ENCODE measurements at regions of chr13 and their contacts with region 1.

Region 1: GRCh38 chr13:30802953-30803478 is 67.7 kb downstream of the ALOX5AP start:
- DNase-seq: peak; percentile 39
- ATAC-seq: peak; percentile 84
- H3K4me3 ChIP-seq: peak overlapping the region in 1 of 3 experiments; percentile 25; a peak in 1 of 6 replicates
- H3K27ac ChIP-seq: no peak overlapping the region
- H3K4me1 ChIP-seq: peaks cover 59% of the 10 kb centered on the region
- H3K27me3 ChIP-seq: no peaks in the 10 kb centered on the region; a peak in 1 of 5 replicates
- CTCF ChIP-seq: peak; percentile 95
- EP300 ChIP-seq: no peak
- POLR2A ChIP-seq: no peak
- RAD21 ChIP-seq: peak; percentile 90

Region 2: DNA sequence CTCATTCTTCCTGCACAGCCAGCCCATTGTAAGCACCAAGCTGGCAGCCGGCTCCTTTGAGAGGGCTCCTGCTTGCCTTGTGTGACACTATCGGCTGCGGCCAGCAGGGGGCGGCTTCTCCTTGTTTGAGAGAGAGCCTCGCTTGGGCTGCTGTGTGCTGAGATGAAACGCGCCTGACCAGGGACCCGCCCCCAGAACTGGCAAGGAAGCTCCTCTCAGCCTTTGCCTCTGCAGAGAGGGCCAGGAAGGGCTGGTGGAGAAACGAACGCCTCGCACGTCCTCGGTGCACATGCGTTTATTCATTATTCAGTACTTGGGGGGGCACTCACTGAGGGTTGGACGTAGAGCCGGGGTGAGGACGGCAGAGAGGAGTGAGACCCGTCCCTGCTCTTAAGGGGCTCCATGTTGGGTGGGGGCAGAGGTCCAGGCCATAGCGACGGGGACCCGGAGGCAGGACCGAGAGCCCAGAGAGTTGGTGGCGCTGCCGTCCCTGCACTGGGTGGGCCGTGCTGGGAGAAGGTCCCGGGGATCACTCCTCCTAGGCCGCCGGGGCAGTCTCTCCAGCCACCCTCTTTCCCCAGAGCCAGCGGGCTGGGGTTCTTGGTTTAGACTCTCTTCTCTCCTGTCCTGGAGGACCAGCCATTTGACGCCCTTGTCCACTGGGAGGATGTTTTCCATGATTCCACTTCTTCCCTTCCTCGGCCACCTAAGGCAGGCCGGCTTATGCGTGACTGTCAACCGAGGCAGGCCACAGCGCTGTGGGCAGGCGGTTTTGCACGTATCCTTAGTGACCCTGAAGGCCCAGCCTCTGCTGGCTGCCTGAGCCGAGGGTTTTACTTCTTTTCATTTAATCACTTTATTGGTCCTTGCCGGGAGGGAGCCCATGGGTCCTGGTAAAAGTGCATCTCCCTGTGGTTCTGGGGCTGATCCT is 670.1 kb before region 1 on chr13:
- CTCF ChIA-PET with region 1: no interaction called
- POLR2A ChIA-PET with region 1: no interaction called
- in situ Hi-C with region 1: no loop called
- intact Hi-C with region 1: loop called (anchors 10 kb)
- DNase-seq: peak; percentile 80
- ATAC-seq: peak; percentile 97
- H3K4me3 ChIP-seq: peak overlapping the region in 1 of 3 experiments; percentile 20; a peak in 1 of 6 replicates
- H3K27ac ChIP-seq: no peak overlapping the region
- H3K4me1 ChIP-seq: peaks cover 9% of the 10 kb centered on the region; the same call in 1 of the 2 replicates
- H3K27me3 ChIP-seq: peaks cover 0 to 19% of the 10 kb centered on the region in 2 experiments; a peak in 3 of 5 replicates
- CTCF ChIP-seq: peak; percentile 94
- EP300 ChIP-seq: no peak
- POLR2A ChIP-seq: no peak
- RAD21 ChIP-seq: peak; percentile 86

Region 3: DNA sequence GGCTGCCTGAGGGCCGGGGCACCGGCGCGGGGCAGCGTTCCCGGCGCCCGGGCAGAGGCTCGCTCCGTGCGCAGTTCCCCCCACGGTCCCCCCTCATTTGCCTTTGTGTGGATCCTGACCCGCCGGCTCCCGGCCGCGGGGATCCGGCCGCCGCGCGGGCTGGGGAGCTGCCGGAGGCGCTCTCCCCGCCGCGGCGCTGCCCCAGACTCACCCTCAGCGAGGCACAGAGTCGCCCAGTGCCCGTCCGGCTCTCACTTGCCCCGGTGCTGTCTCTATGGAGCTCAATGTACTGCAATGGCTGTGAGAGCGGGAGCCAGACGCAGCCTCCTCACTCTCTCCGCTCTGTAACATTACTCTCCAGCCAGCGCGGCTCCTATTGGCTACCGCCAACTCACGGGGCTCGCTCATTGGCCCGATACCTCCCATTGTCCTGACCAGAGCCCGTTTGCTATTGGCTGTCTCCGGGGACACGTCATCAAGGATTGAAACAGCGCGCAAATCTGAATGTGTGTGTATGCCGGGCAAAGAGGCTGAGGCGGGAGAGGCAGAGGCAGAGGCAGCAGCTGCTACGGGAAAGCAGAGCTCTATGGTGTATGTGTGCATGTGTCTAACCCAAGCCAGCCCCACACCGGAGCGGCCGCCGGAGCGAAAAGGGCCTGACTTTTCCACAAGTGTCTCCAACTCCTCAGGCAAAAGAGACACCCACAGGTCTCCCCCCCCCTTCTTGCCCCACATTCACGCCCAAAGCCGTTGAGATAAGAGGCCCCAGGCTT is 337.2 kb before region 1 on chr13 and contains the start of gene HMGB1:
- CTCF ChIA-PET with region 1: no interaction called
- POLR2A ChIA-PET with region 1: no interaction called
- in situ Hi-C with region 1: no loop called
- intact Hi-C with region 1: loop called (anchors 1 kb)
- DNase-seq: peak; percentile 98
- ATAC-seq: peak; percentile 97
- H3K4me3 ChIP-seq: peak within 1 kb of the TSS; percentile 74 to 92 (median 86)
- H3K27ac ChIP-seq: peak within 1 kb of the TSS; percentile 99
- H3K4me1 ChIP-seq: peaks cover 27% of the 10 kb centered on the region
- H3K27me3 ChIP-seq: no peaks in the 10 kb centered on the region; a peak in 2 of 5 replicates
- CTCF ChIP-seq: no peak
- EP300 ChIP-seq: no peak
- POLR2A ChIP-seq: peak; percentile 85 to 94
- RAD21 ChIP-seq: peak; percentile 46; the same call in 1 of the 2 replicates
- total RNA-seq, gene HMGB1: 584 and 878 TPM in 2 replicates

Region 4: GRCh38 chr13:30477346-30478195 is 325.4 kb before region 1 on chr13:
- CTCF ChIA-PET with region 1: no interaction called
- POLR2A ChIA-PET with region 1: no interaction called
- in situ Hi-C with region 1: no loop called
- intact Hi-C with region 1: no loop called
- DNase-seq: no peak
- ATAC-seq: no peak
- H3K4me3 ChIP-seq: no peak overlapping the region
- H3K27ac ChIP-seq: no peak overlapping the region
- H3K4me1 ChIP-seq: peaks cover 12% of the 10 kb centered on the region
- H3K27me3 ChIP-seq: no peaks in the 10 kb centered on the region; a peak in 1 of 5 replicates
- CTCF ChIP-seq: no peak
- EP300 ChIP-seq: no peak
- POLR2A ChIP-seq: no peak
- RAD21 ChIP-seq: no peak

Region 5: DNA sequence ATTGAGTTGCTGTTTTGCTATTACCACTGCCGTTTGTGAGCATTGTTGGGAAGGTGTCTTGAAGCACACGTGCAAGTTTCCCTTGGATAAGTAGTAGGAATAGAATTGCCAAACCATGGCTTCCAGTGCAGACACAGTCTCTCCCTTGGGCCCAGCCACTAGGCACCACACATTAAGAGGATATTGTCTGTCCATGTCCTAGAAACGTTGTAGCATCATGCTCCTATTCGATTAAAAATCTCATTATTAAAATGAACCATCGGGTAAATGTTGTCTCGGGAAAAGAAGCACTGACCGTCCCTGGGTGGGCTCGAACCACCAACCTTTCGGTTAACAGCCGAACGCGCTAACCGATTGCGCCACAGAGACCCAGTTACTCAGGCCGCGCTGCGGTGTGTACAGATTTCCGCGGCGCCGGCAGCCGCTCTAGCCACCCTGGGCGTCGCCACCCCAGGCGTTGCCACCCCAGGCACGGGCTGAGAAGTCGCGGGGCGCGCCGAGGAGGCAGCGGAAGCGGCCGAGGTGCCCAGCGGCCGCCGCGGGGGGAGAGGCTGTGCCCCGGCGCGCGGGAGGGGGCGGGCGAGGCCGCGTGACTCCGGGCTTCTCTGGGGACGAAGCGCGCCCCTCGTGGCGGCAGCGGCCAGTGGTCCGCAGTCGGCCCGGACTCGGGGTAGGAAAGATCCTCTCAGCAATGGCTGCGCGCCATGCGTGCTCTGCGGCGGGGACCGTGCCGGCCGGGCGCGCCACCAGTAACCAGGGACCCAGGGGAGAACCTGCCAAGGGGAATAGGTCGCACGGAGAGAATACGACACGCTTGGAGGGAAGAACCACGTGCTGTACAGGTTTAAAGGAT is 129.1 kb before region 1 on chr13:
- CTCF ChIA-PET with region 1: no interaction called
- POLR2A ChIA-PET with region 1: no interaction called
- in situ Hi-C with region 1: loop called (anchors 5 kb)
- intact Hi-C with region 1: loop called (anchors 2 kb)
- DNase-seq: peak; percentile 76
- ATAC-seq: peak; percentile 95
- H3K4me3 ChIP-seq: peak overlapping the region; percentile 58 to 73 (median 68)
- H3K27ac ChIP-seq: peak overlapping the region; percentile 65
- H3K4me1 ChIP-seq: peaks cover 27% of the 10 kb centered on the region
- H3K27me3 ChIP-seq: no peaks in the 10 kb centered on the region
- CTCF ChIP-seq: peak; percentile 79
- EP300 ChIP-seq: peak in 1 of 2 experiments; percentile 67; a peak in 2 of 4 replicates
- POLR2A ChIP-seq: peak; percentile 38 to 52; a peak in 2 of 4 replicates
- RAD21 ChIP-seq: peak; percentile 84

Region 6: DNA sequence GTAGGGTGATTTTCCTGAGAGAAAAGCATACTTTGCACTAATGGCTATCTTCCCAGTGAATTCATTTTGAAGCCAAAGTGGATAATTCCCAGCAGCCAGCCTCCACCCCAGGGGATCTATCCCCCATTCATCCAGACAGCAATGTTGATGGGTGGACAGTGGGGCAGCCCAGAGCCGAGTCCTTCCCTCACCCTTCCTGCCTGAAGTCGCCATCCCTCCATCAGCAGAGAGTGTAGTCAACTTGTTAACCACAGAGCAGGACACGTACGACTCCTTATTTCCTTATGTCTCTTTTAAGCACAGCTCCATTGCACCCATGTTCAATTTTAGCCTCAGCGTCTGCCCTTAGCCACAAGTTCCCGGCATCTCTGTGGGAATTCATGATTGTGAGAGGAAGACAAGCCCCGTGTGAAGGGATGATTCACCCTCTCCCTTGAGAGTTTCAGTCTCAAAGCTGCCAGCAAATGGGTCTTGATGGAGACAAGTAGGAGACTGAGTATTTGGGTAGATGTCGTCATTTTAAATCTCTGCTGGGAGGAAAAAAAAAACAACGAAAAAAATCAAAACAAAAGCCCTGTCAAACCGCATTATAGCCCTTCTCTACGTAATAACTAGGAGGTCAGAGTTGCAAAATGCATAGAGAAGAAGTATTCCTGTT is 44.8 kb after region 1 on chr13:
- CTCF ChIA-PET with region 1: no interaction called
- POLR2A ChIA-PET with region 1: no interaction called
- in situ Hi-C with region 1: no loop called
- intact Hi-C with region 1: loop called (anchors 5 kb)
- DNase-seq: no peak
- ATAC-seq: no peak
- H3K4me3 ChIP-seq: 0 out of 6 replicates have a peak overlapping the region, but pooled peaks of 1 of the 3 experiments have one; percentile 27
- H3K27ac ChIP-seq: no peak overlapping the region
- H3K4me1 ChIP-seq: peaks cover 97% of the 10 kb centered on the region
- H3K27me3 ChIP-seq: no peaks in the 10 kb centered on the region
- CTCF ChIP-seq: no peak
- EP300 ChIP-seq: no peak
- POLR2A ChIP-seq: no peak
- RAD21 ChIP-seq: no peak

Region 7: GRCh38 chr13:31350560-31350959 is 547.5 kb after region 1 on chr13:
- CTCF ChIA-PET with region 1: no interaction called
- POLR2A ChIA-PET with region 1: no interaction called
- in situ Hi-C with region 1: no loop called
- intact Hi-C with region 1: no loop called
- DNase-seq: no peak
- ATAC-seq: no peak
- H3K4me3 ChIP-seq: no peak overlapping the region
- H3K27ac ChIP-seq: no peak overlapping the region
- H3K4me1 ChIP-seq: no peaks in the 10 kb centered on the region
- H3K27me3 ChIP-seq: no peaks in the 10 kb centered on the region; a peak in 2 of 5 replicates
- CTCF ChIP-seq: no peak
- EP300 ChIP-seq: no peak
- POLR2A ChIP-seq: no peak
- RAD21 ChIP-seq: no peak